CD14-positive monocyte (primary cell): ENCODE measurements at regions of chr7 and their contacts with region 1.

Region 1: GRCh38 chr7:130430841-130431666 is 9.8 kb downstream of the CEP41 start:
- DNase-seq: no peak
- H3K4me3 ChIP-seq: peak overlapping the region in 1 of 3 experiments; percentile 19
- H3K4me3 Mint-ChIP-seq: no peak overlapping the region
- H3K27ac ChIP-seq: no peak overlapping the region
- H3K27ac Mint-ChIP-seq: no peak overlapping the region
- H3K4me1 ChIP-seq: peaks cover 35 to 47% of the 10 kb centered on the region in 2 donors
- H3K4me1 Mint-ChIP-seq: peaks cover 13% of the 10 kb centered on the region
- H3K27me3 ChIP-seq: no peaks in the 10 kb centered on the region
- H3K27me3 Mint-ChIP-seq: peaks cover 0 to 3% (median 0%) of the 10 kb centered on the region in 3 donors
- CTCF ChIP-seq: no peak

Region 2: GRCh38 chr7:130419658-130420057 is 11.4 kb before region 1 on chr7:
- intact Hi-C with region 1: no loop called
- DNase-seq: no peak
- H3K4me3 ChIP-seq: no peak overlapping the region
- H3K4me3 Mint-ChIP-seq: no peak overlapping the region
- H3K27ac ChIP-seq: no peak overlapping the region
- H3K27ac Mint-ChIP-seq: no peak overlapping the region
- H3K4me1 ChIP-seq: peaks cover 3 to 7% of the 10 kb centered on the region in 2 donors
- H3K4me1 Mint-ChIP-seq: peaks cover 20% of the 10 kb centered on the region
- H3K27me3 ChIP-seq: no peaks in the 10 kb centered on the region
- H3K27me3 Mint-ChIP-seq: peaks cover 0 to 2% (median 0%) of the 10 kb centered on the region in 3 donors
- CTCF ChIP-seq: no peak

Region 3: DNA sequence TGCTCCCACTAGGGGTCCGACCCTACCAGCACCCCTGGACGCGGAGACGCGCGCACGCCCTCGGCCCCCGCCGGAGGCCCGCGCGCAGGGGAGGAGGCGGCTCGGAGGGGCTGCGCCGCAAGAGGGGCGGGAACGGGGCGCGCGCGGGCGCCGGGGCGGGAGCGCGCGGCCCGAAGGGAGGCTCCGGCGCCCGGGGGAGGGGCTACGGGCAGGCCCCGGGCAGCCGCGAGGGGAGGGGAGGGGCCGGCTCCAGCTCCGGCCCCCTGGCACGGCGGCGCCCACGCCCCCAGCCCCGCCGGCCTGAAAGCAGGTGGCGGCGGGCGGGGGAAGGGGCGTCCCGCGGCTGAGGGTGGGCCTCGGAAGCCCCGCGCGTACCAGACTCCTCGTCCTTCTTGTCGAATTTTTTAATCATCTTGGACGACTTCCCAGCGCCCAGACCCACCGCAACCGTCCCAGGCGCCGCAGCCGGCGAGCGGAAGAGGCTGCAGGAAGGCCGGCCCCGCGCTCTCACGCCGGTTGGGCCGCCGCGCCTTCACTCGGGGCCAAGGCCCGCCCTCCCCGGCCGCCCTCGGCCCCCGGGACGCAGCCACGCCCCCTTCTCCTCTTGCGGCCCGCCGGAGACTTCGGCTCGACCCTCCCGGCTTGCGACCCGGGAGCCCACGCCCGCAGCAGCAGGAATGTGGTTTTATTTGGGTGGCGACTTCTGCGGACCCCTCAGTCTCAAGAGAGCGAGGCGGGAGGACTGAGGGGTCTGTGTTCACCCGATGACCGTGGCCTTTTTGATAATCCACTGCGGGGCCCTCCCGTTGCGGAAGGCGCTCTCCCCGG is 237.4 kb after region 1 on chr7 and contains the start of gene COPG2:
- intact Hi-C with region 1: loop called in 1 of 2 experiments (anchors 10 kb)
- DNase-seq: peak; percentile 64 to 71 (median 67)
- H3K4me3 ChIP-seq: peak within 1 kb of the TSS; percentile 71 to 95 (median 95)
- H3K4me3 Mint-ChIP-seq: peak within 1 kb of the TSS; percentile 91
- H3K27ac ChIP-seq: peak within 1 kb of the TSS; percentile 36 to 83
- H3K27ac Mint-ChIP-seq: peak within 1 kb of the TSS; percentile 68 to 88 (median 85)
- H3K4me1 ChIP-seq: peaks cover 18 to 27% of the 10 kb centered on the region in 2 donors
- H3K4me1 Mint-ChIP-seq: peaks cover 29% of the 10 kb centered on the region
- H3K27me3 ChIP-seq: no peaks in the 10 kb centered on the region
- H3K27me3 Mint-ChIP-seq: peaks cover 0 to 1% (median 0%) of the 10 kb centered on the region in 3 donors
- CTCF ChIP-seq: no peak
- polyA plus RNA-seq, gene COPG2: 2.7 to 10.3 (median 9.6) TPM